ENCODE measurements at regions of chr2 and their contacts with region 1.

Region 1: DNA sequence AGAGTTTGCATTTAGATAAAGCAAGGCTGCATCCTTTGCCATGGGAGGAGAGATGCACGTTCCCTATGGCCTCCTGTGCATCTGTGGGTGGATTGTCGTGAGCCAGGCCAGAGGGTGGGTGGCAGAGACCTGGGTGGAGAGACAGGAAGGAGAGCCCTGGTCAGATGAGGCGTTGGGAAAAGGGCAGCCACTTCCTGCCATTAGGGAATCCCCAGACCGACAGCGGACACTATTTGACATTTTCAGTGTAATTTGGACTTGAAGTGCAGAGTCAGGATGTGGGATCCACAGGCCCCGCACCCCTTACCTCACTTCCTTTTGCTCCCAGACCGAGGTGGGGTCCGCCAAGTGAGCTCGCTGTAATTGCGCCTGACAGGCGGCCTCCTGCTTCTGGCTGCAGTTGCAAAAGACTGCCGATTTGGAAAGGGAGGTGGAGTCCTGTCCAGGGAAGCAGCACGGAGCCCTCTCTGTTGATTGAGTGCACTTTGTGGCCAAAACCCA is 150.0 kb downstream of the DYSF start:
- DNase-seq: peak in 1 of 2 donors; percentile 35
- H3K4me3 ChIP-seq: no peak overlapping the region
- H3K27ac ChIP-seq: no peak overlapping the region
- H3K4me1 ChIP-seq: no peaks in the 10 kb centered on the region
- H3K27me3 ChIP-seq: no peaks in the 10 kb centered on the region
- CTCF ChIP-seq: no peak
- POLR2A ChIP-seq: no peak

Region 2: GRCh38 chr2:70086838-70087701 is 1516.3 kb before region 1 on chr2 and contains the start of gene PCBP1:
- intact Hi-C with region 1: no loop called
- DNase-seq: peak; percentile 92 to 96
- H3K4me3 ChIP-seq: peak within 1 kb of the TSS; percentile 77 to 90 (median 87)
- H3K27ac ChIP-seq: peak within 1 kb of the TSS; percentile 100
- H3K4me1 ChIP-seq: peaks cover 0 to 15% of the 10 kb centered on the region in 2 donors
- H3K27me3 ChIP-seq: no peaks in the 10 kb centered on the region
- CTCF ChIP-seq: no peak
- POLR2A ChIP-seq: peak; percentile 62
- total RNA-seq, gene PCBP1: 121 to 210 (median 145) TPM

Region 3: GRCh38 chr2:71379088-71379487 is 224.3 kb before region 1 on chr2:
- intact Hi-C with region 1: no loop called
- DNase-seq: no peak
- H3K4me3 ChIP-seq: no peak overlapping the region
- H3K27ac ChIP-seq: no peak overlapping the region
- H3K4me1 ChIP-seq: no peaks in the 10 kb centered on the region
- H3K27me3 ChIP-seq: no peaks in the 10 kb centered on the region
- CTCF ChIP-seq: no peak
- POLR2A ChIP-seq: no peak

Region 4: DNA sequence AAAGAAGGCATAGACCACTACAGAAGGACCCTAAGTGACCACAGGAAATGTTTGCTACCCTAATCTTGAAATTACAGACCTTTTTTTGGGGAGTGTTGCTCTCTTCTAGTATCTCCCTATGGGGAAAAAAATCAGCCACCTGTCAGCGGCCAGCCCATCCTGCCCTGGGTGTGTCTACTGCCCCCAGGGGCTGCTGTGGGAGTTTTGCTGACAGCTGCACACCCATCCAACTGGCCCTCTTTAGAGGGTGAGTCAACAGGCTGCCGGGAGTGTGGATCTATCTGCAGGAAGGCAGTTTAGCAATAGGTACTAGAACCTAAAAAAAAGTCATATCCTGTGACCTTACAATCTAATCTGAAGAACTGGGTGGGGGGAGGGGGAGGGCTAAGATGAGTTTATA is 150.8 kb before region 1 on chr2:
- intact Hi-C with region 1: no loop called
- DNase-seq: no peak
- H3K4me3 ChIP-seq: no peak overlapping the region
- H3K27ac ChIP-seq: no peak overlapping the region
- H3K4me1 ChIP-seq: peaks cover 0 to 10% of the 10 kb centered on the region in 2 donors
- H3K27me3 ChIP-seq: peaks cover 0 to 20% of the 10 kb centered on the region in 2 donors
- CTCF ChIP-seq: no peak
- POLR2A ChIP-seq: no peak

Region 5: GRCh38 chr2:71563872-71564271 is 39.5 kb before region 1 on chr2:
- intact Hi-C with region 1: loop called (anchors 2 kb)
- DNase-seq: no peak
- H3K4me3 ChIP-seq: no peak overlapping the region
- H3K27ac ChIP-seq: no peak overlapping the region
- H3K4me1 ChIP-seq: no peaks in the 10 kb centered on the region
- H3K27me3 ChIP-seq: no peaks in the 10 kb centered on the region
- CTCF ChIP-seq: no peak
- POLR2A ChIP-seq: no peak

Region 6: DNA sequence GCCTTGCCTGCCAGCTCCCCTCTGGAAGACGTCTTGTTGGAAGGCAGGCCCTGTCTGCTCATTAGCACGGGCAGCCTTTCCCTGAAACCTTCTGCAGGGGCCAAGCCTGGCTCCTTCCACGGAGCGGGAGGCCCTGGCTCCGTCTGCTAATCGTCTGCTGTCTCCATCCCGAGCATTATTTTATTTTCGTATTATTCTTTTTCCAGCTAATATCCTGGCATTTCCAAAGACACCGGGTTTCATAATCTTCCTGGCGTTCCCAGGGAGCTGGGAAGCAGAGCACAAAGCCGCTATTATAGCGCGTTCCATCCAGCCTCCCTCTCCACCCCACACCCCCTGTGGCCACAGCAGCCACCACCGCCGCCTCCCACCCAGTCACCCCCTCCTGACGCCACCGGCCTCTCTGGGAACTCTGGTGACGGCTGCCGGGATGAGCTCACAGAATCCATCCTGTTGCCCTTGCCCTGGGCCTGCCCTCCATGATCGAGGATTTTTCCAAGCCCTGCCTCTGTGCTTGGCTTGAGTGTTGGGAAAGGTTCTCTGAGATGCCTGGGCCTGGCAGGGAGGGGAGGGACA is 24.5 kb before region 1 on chr2:
- intact Hi-C with region 1: loop called (anchors 1 kb)
- DNase-seq: peak in 1 of 2 donors; percentile 77
- H3K4me3 ChIP-seq: peak overlapping the region in 2 of 3 donors; percentile 29 to 55
- H3K27ac ChIP-seq: peak overlapping the region; percentile 70 to 86
- H3K4me1 ChIP-seq: no peaks in the 10 kb centered on the region
- H3K27me3 ChIP-seq: no peaks in the 10 kb centered on the region
- CTCF ChIP-seq: no peak
- POLR2A ChIP-seq: no peak